ENCODE measurements at regions of chr12 and their contacts with region 1.

Region 1: DNA sequence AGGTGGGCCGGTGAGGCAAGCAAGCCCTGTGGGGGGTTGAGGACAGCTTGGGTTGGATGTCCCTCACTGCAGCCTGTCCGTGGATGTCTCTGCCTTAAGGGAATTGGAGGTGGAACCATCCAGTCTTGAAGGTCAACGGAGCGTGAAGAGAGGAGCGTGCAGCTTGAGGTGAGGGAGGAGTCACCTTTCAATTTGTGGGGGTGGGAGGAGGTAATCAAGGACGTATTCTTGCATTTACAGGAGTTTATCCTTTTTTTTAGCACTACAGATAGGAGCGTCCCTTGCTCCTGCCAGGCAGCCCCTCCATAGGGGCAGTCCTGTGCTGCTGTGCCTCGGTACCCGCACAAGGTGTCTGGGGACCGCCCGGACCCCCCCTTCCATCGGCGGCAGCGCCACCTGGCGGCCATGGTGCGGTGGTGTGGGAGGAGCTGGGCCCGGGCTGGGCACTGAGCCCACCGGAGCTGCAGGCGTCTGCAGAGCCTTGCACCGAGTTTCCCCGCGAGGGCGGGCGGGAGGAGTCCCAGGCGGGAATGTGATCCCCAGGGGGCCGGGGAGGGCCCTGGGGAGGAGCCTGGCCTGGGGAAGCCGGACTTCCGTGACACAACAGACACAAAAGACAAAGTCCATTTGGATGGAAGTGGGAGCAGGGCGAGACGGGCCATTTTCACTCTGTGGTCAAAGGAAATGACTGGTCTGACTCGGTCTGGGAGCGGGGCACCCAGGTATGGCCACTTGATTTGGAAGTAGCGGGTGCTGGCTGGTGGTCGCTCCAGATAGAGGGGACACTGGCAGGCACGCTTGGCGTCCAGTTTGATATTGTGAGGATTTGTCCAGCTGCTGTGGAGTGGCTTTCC is 923 bp downstream of the DNAJC22 start:
- DNase-seq: peak; percentile 68 to 91 (median 81)
- ATAC-seq: peak; percentile 78
- H3K4me3 ChIP-seq: peak overlapping the region; percentile 47 to 54
- H3K4me3 Mint-ChIP-seq: peak overlapping the region; percentile 79
- H3K27ac ChIP-seq: no peak overlapping the region
- H3K27ac Mint-ChIP-seq: no peak overlapping the region
- H3K4me1 ChIP-seq: peaks cover 45% of the 10 kb centered on the region
- H3K4me1 Mint-ChIP-seq: peaks cover 40% of the 10 kb centered on the region
- H3K27me3 ChIP-seq: peaks cover 33 to 45% of the 10 kb centered on the region in 2 experiments
- H3K27me3 Mint-ChIP-seq: peaks cover 57% of the 10 kb centered on the region
- CTCF ChIP-seq: peak; percentile 97

Region 2: DNA sequence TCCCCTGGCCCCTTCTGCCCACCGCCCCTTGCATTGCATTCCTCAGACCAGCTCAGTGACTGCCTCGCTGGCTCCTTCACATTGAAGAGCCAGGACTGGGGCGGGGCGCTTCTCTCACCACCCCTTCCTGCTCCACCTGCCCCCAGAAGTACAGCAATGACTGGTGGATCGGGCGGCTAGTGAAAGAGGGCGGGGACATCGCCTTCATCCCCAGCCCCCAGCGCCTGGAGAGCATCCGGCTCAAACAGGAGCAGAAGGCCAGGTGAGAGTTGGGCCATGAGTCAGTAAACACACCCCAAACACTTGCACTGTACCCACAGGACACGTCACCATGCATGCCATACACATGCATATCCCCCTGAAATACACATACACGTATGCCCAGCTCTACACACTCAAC is 523.5 kb before region 1 on chr12:
- CTCF ChIA-PET with region 1: no interaction called
- POLR2A ChIA-PET with region 1: no interaction called
- intact Hi-C with region 1: no loop called
- DNase-seq: peak in 5 of 9 experiments; percentile 16 to 59 (median 43)
- ATAC-seq: peak; percentile 84
- H3K4me3 ChIP-seq: no peak overlapping the region
- H3K4me3 Mint-ChIP-seq: no peak overlapping the region
- H3K27ac ChIP-seq: no peak overlapping the region
- H3K27ac Mint-ChIP-seq: no peak overlapping the region
- H3K4me1 ChIP-seq: no peaks in the 10 kb centered on the region
- H3K4me1 Mint-ChIP-seq: peaks cover 5% of the 10 kb centered on the region
- H3K27me3 ChIP-seq: no peaks in the 10 kb centered on the region
- H3K27me3 Mint-ChIP-seq: no peaks in the 10 kb centered on the region
- CTCF ChIP-seq: no peak

Region 3: DNA sequence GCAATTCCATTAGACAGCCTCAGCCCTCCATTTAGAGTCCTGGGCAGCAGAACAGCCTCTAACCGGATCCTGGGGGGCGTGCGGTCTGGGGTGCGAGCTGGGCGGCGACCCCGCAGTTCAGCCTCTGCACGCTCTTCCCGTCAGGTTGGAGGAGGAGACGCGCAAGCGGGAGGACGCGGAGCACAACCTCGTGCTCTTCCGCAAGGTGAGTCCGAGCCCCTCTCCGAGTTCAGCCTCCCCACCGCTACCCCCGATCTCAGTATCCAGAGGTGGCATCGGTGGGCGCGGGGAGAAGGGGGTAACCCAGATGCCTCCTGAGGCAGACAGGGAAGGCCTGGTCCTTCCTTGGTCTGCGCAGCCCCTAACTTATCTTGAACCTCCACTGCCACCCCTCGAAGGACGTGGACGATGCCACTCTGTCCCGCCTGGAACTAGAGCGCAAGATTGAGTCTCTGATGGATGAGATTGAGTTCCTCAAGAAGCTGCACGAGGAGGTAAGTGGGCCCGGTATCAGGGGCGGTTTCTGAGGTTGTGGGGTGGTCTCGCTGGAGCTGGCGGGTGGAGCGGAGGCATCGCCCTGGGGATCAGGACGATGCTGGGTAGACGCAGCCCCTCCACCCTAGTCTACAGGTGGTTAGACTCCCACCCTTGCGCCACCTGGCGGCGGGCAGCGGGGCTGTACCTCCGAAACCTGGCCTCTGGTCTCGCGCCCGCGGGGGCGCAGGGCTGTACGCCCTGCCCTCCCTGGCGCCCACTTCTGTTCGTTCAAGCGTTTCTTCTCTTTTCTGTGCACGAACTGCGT is 51.4 kb before region 1 on chr12:
- CTCF ChIA-PET with region 1: interaction called, 118 read pairs
- POLR2A ChIA-PET with region 1: interaction called, 4 read pairs
- intact Hi-C with region 1: no loop called
- DNase-seq: peak; percentile 30 to 76 (median 66)
- ATAC-seq: peak; percentile 84
- H3K4me3 ChIP-seq: peak overlapping the region in 1 of 2 experiments; percentile 46
- H3K4me3 Mint-ChIP-seq: peak overlapping the region; percentile 60
- H3K27ac ChIP-seq: no peak overlapping the region
- H3K27ac Mint-ChIP-seq: no peak overlapping the region
- H3K4me1 ChIP-seq: peaks cover 13% of the 10 kb centered on the region
- H3K4me1 Mint-ChIP-seq: peaks cover 19% of the 10 kb centered on the region
- H3K27me3 ChIP-seq: peaks cover 34 to 36% of the 10 kb centered on the region in 2 experiments
- H3K27me3 Mint-ChIP-seq: peaks cover 45% of the 10 kb centered on the region
- CTCF ChIP-seq: peak; percentile 80

Region 4: GRCh38 chr12:49331380-49332222 is 16.0 kb before region 1 on chr12:
- CTCF ChIA-PET with region 1: interaction called, 35 read pairs
- POLR2A ChIA-PET with region 1: interaction called, 5 read pairs
- intact Hi-C with region 1: no loop called
- DNase-seq: peak in 2 of 9 experiments; percentile 44 to 52
- ATAC-seq: peak; percentile 70
- H3K4me3 ChIP-seq: no peak overlapping the region
- H3K4me3 Mint-ChIP-seq: no peak overlapping the region
- H3K27ac ChIP-seq: no peak overlapping the region
- H3K27ac Mint-ChIP-seq: no peak overlapping the region
- H3K4me1 ChIP-seq: peaks cover 5% of the 10 kb centered on the region
- H3K4me1 Mint-ChIP-seq: peaks cover 12% of the 10 kb centered on the region
- H3K27me3 ChIP-seq: peaks cover 15 to 18% of the 10 kb centered on the region in 2 experiments
- H3K27me3 Mint-ChIP-seq: peaks cover 38% of the 10 kb centered on the region
- CTCF ChIP-seq: peak; percentile 49

Region 5: DNA sequence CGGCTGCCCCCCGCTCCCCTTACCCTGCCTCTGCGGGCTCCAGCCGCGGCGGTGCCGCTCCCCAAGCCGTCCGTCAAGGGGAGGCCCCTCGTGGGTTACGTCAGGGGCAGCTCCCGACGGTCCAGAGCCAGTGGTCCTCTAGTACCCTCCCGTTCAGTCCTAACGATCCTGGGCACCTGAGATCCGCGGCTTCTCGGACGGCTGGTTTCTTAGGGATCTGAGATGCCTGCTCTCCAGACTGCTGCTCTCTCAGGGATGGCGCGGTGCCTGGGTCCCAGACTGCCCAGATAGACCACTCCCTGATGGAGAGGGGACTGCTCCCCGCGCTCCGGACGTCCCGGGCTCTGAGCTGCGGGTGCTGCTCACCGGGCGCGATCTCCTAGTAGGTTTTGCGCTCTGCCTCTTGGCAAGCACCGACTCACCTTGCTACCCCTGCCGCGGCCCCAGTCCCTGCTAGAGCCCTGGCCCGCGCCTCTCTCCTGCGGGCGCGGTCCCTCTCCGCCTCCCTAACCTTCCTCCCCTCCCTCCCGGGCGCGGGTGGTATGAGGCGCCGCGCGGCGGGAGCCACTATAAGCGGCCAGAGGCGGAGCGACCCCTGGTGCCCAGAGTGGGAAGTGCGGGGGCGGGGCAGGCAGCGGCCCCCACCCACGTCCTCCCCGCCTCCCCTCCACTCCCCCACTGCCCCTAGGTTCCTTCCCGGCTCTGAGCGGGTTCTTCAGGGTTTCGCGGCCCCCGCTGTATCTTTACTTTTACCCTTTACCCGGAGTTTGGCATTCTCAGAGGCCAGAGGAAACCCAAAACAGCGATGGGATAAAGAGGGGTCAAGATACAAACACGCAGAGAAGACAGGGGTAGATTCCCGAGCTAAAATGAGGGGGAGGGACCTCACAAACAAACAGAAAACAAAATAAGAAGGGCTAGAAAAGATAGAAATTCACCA is 10.7 kb before region 1 on chr12 and contains the start of gene C1QL4:
- CTCF ChIA-PET with region 1: interaction called, 35 read pairs
- POLR2A ChIA-PET with region 1: interaction called, 5 read pairs
- intact Hi-C with region 1: no loop called
- DNase-seq: peak; percentile 79 to 94 (median 89)
- ATAC-seq: peak; percentile 97
- H3K4me3 ChIP-seq: peak within 1 kb of the TSS; percentile 47 to 51
- H3K4me3 Mint-ChIP-seq: peak within 1 kb of the TSS; percentile 75
- H3K27ac ChIP-seq: no peak within 1 kb of the TSS
- H3K27ac Mint-ChIP-seq: no peak within 1 kb of the TSS
- H3K4me1 ChIP-seq: peaks cover 8% of the 10 kb centered on the region
- H3K4me1 Mint-ChIP-seq: peaks cover 26% of the 10 kb centered on the region
- H3K27me3 ChIP-seq: peaks cover 18 to 36% of the 10 kb centered on the region in 2 experiments
- H3K27me3 Mint-ChIP-seq: peaks cover 51% of the 10 kb centered on the region
- CTCF ChIP-seq: peak; percentile 91
- total RNA-seq, gene C1QL4: not detected

Region 6: GRCh38 chr12:49397000-49397399 is 49.4 kb after region 1 on chr12:
- CTCF ChIA-PET with region 1: no interaction called
- POLR2A ChIA-PET with region 1: no interaction called
- intact Hi-C with region 1: no loop called
- DNase-seq: no peak
- ATAC-seq: no peak
- H3K4me3 ChIP-seq: no peak overlapping the region
- H3K4me3 Mint-ChIP-seq: no peak overlapping the region
- H3K27ac ChIP-seq: no peak overlapping the region
- H3K27ac Mint-ChIP-seq: no peak overlapping the region
- H3K4me1 ChIP-seq: no peaks in the 10 kb centered on the region
- H3K4me1 Mint-ChIP-seq: no peaks in the 10 kb centered on the region
- H3K27me3 ChIP-seq: no peaks in the 10 kb centered on the region
- H3K27me3 Mint-ChIP-seq: no peaks in the 10 kb centered on the region
- CTCF ChIP-seq: no peak

Measured in CD8-positive, alpha-beta T cell (primary cell).